Activated T-helper 1 cell treated with anti-CD3 and anti-CD28 coated beads, Interleukin-12 subunit alpha, Interleukin-12 subunit beta, Interleukin-2, Interleukin-4 antibody, amounts not matched to agents 30 ng/mL and 10 ng/mL and 1 ng/mL, durations not matched to agents 14 hours and 24 hours and 36 hours (primary cell): ENCODE measurements at regions of chr3 and their contacts with region 1.

Region 1: GRCh38 chr3:101518421-101518871 is 5.4 kb upstream of the SENP7 start:
- DNase-seq: peak; percentile 63
- H3K4me3 Mint-ChIP-seq: peak overlapping the region; percentile 32
- H3K27ac Mint-ChIP-seq: peak overlapping the region; percentile 77
- H3K4me1 Mint-ChIP-seq: peaks cover 49% of the 10 kb centered on the region
- H3K27me3 Mint-ChIP-seq: no peaks in the 10 kb centered on the region

Region 2: DNA sequence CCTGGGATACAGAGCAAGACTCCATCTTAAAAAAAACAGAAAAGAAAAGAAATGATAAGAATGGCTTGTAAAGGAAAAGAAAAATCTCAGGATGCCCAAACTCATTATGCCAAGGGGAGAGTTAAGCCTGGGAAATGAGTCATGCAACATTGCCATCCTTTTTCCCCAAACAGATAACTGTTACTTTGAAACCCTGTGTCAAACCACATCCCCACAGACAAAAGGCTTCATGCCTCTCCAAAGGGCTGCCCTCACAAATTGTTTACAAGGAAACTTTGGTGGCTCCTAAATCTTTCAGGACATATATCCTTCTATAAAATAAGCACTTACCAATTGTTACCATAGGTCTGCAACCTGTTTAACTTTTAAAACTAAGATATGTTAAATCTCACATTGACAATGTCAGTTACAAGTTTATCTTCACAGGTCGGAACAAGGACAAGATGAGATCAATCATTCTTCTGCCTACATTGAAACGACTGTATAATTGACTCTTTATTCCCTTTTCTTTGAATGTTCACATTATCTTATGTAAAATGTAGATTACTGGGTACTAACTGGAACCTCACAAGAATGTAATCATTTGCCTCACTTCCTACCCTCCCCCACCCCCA is 13.1 kb after region 1 on chr3:
- intact Hi-C with region 1: loop called (anchors 1 kb)
- DNase-seq: no peak
- H3K4me3 Mint-ChIP-seq: peak overlapping the region; percentile 17
- H3K27ac Mint-ChIP-seq: peak overlapping the region; percentile 34
- H3K4me1 Mint-ChIP-seq: peaks cover 35% of the 10 kb centered on the region
- H3K27me3 Mint-ChIP-seq: no peaks in the 10 kb centered on the region

Region 3: DNA sequence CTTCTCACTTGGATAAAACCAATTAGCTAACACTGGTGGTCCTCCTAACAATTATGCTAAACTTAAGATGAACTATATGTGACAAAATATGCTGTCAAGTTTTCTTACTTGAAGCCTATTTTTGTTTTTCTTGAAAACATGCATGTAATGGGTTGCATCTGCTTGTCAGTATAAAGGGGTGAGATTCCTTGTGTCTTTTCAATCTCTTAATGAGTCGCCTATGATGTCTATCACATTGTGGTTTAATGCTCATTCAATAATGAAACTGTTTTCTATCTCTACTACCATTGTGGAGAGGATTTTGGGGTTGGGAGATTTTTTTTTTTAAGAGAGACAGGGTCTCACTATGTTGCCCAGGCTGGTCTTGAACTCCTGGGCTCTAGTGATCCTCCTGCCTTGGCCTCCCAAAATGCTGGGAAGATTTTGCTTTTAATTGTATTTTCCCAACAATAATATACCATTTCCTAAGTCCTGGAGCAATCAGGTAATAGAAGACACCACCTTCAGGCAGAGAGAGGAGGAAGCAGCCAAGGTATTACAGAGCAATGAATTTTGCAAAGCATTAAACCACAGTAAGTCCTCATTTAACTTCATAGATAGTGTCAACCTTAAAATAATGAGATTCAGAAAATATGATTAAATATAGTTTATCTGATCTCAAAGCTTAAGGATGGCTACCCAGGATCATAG is 25.9 kb after region 1 on chr3:
- intact Hi-C with region 1: loop called (anchors 1 kb)
- DNase-seq: no peak
- H3K4me3 Mint-ChIP-seq: no peak overlapping the region
- H3K27ac Mint-ChIP-seq: peak overlapping the region; percentile 71
- H3K4me1 Mint-ChIP-seq: peaks cover 29% of the 10 kb centered on the region
- H3K27me3 Mint-ChIP-seq: no peaks in the 10 kb centered on the region

Region 4: DNA sequence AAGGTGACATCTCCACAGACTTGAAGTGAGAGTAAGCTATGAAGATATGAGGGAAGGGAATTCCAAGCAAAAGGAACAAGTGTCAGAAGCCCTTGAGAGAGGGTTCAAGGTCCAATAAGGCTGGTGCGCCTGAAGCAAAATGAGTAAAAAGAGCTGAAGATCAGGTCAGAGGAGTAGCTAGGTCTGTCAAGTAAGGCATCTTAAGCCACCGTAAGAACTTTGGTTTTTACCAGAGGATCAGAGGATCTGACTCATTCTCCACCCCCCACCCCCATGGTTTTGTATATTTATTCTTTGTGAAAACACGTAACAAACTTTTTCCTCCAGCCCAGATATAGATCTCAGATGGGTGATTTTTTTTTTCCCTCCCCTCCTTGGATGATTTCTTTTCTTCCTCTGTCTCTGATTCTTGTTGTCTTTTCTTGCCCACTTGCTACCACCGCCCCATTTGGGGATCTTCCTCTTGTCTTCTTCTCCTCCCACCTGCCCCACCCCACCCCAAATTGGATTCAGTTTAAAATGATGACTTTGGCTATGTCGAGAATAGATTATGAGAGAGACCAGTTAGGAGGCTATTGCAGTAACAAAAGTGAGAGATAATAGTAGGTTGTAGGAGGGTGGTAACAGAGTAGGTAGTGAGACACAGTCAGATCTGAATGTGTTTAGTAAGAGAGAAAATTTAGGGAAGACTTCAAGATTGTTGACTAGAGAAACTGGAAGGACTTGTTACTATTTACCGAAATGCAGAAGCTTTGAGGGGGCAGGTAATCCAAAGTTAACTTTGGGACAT is 49.3 kb after region 1 on chr3:
- intact Hi-C with region 1: loop called (anchors 1 kb)
- DNase-seq: no peak
- H3K4me3 Mint-ChIP-seq: peak overlapping the region; percentile 24
- H3K27ac Mint-ChIP-seq: peak overlapping the region; percentile 96
- H3K4me1 Mint-ChIP-seq: peaks cover 70% of the 10 kb centered on the region
- H3K27me3 Mint-ChIP-seq: no peaks in the 10 kb centered on the region

Region 5: GRCh38 chr3:101842245-101842934 is 323.9 kb after region 1 on chr3:
- intact Hi-C with region 1: no loop called
- DNase-seq: no peak
- H3K4me3 Mint-ChIP-seq: no peak overlapping the region
- H3K27ac Mint-ChIP-seq: no peak overlapping the region
- H3K4me1 Mint-ChIP-seq: peaks cover 31% of the 10 kb centered on the region
- H3K27me3 Mint-ChIP-seq: no peaks in the 10 kb centered on the region